ENCODE measurements at regions of chr1 and their contacts with region 1.

Region 1: DNA sequence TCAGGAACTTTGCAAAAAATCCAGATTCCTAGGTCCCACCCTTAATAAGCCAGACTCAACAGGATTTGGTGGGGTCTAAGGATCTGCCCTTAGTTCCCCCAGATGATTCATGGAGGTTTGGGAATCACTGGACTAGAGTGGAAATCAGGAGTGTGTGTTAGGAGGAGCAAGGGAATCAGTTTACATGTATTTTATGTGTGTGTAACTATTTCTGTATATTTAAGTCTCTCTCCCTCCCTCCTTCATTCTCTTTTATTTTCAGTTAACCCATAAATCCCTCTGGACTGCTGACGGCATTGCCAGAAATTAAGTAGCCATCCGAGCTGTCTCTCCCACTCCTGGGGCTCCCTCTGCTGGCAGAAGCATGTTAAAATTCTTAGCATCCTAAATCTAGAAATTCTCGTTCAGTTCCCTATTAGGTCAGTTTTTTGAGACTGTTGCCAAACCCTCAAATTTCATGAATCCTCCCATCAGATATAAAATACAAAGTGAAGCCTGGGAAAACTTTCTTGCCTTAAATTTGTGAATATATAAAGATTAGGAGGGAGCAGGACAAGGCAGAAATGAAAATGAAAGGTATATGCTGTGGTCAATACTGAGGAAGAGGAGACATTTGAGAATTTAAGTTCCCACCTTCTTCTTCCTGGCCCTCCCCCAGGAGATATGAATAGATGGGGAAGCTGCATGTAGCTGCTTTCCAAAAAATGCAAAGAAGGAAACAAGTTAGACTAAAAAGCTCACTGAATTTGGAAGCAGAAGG is 11.7 kb upstream of the HSD11B1 start:
- DNase-seq: peak; percentile 89
- H3K4me3 ChIP-seq: no peak overlapping the region
- H3K27ac ChIP-seq: no peak overlapping the region
- H3K4me1 ChIP-seq: no peaks in the 10 kb centered on the region
- H3K27me3 ChIP-seq: no peaks in the 10 kb centered on the region
- CTCF ChIP-seq: peak; percentile 86

Region 2: GRCh38 chr1:208834381-208835096 is 858.4 kb before region 1 on chr1:
- intact Hi-C with region 1: no loop called
- DNase-seq: no peak
- H3K4me3 ChIP-seq: no peak overlapping the region
- H3K27ac ChIP-seq: no peak overlapping the region
- H3K4me1 ChIP-seq: no peaks in the 10 kb centered on the region
- H3K27me3 ChIP-seq: no peaks in the 10 kb centered on the region
- CTCF ChIP-seq: no peak

Region 3: GRCh38 chr1:209576798-209577197 is 116.1 kb before region 1 on chr1:
- intact Hi-C with region 1: loop called (anchors 1 kb)
- DNase-seq: peak; percentile 88
- H3K4me3 ChIP-seq: no peak overlapping the region
- H3K27ac ChIP-seq: no peak overlapping the region
- H3K4me1 ChIP-seq: no peaks in the 10 kb centered on the region
- H3K27me3 ChIP-seq: no peaks in the 10 kb centered on the region
- CTCF ChIP-seq: peak; percentile 89

Region 4: DNA sequence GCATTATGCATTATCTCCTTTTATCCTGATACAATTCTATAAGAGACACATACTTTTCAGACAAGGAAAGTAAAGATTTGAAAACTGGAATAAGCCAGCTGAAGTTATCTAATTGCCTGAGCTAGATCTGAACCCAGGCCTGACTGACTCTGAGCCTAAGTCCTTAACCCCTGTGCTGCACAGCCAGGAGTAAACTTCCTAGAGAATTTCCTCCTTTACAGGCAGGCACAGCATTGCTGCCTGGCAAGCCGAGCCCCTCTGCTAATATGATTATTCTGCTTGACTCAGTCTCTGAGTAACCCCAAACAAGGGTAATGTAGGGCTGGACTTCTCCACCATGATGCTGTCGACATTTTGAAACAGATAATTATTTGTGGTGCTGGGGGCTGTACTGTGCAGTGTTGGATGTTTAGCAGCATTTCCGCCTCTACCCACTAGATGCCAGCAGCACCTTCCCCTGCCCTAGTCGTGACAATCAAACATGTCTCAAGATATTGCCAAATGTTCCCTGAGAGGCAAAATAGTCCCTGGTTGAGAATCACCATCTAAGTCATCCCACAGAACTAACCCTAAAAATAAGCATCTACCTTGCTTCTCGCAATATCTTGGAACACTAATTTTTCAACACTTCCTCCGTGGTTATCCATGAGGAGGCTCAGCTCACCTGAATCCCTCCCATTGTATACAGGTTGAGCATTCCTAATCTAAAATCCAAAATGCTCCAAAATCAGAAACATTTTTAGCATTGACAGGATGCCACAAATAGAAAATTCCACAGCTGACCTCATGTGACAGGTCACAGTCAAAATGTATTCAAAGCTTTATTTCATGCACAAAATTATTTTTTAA is 90.9 kb before region 1 on chr1:
- intact Hi-C with region 1: loop called (anchors 2 kb)
- DNase-seq: no peak
- H3K4me3 ChIP-seq: no peak overlapping the region
- H3K27ac ChIP-seq: no peak overlapping the region
- H3K4me1 ChIP-seq: no peaks in the 10 kb centered on the region
- H3K27me3 ChIP-seq: no peaks in the 10 kb centered on the region
- CTCF ChIP-seq: peak; percentile 57

Region 5: GRCh38 chr1:209648931-209649776 is 43.8 kb before region 1 on chr1:
- intact Hi-C with region 1: loop called (anchors 5 kb)
- DNase-seq: peak; percentile 59
- H3K4me3 ChIP-seq: no peak overlapping the region
- H3K27ac ChIP-seq: peak overlapping the region; percentile 89
- H3K4me1 ChIP-seq: peaks cover 25% of the 10 kb centered on the region
- H3K27me3 ChIP-seq: no peaks in the 10 kb centered on the region
- CTCF ChIP-seq: no peak

Measured in colonic mucosa (tissue), 4 donors.